ENCODE measurements at regions of chr17 and their contacts with region 1.

Region 1: DNA sequence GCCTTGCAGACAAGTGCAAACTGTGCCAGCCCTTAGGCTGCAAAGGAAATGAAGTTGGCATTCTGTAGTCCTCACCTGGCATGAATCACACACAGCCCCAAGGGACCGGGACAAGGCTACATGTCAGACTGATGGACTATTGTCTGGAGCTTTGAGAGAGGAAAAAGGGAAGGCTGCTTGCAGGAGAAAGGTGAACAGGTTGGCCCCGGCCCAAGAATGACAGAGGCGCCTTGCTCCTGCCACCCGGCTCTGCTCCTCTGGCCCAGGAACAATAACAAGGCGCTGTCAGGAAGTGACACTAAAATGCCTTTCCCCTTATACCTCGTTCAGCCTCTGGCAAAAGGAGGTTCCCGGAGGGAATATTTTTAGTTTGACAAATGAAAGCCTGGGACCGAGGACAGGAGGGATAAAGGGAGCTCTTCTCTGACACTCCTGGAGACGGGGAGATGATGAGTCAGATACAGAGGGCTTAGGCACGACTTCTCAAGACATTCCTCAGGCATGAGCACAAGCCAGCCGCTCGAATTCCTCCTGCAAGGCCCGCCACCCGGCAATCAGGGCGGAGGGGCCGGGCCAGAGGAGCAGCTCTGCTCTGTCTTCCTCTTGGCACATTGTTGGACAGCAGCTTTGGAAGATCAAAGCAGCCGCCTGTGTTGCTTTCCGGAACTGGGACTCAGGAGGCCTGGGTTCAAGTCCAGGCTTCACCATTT is 105.8 kb downstream of the NOG start:
- DNase-seq: no peak
- ATAC-seq: no peak
- H3K4me3 ChIP-seq: no peak overlapping the region
- H3K4me3 Mint-ChIP-seq: no peak overlapping the region
- H3K27ac ChIP-seq: no peak overlapping the region
- H3K27ac Mint-ChIP-seq: no peak overlapping the region
- H3K4me1 ChIP-seq: no peaks in the 10 kb centered on the region
- H3K4me1 Mint-ChIP-seq: no peaks in the 10 kb centered on the region
- H3K27me3 ChIP-seq: peaks cover 4% of the 10 kb centered on the region
- H3K27me3 Mint-ChIP-seq: peaks cover 49 to 77% of the 10 kb centered on the region in 2 donors
- CTCF ChIP-seq: no peak

Region 2: DNA sequence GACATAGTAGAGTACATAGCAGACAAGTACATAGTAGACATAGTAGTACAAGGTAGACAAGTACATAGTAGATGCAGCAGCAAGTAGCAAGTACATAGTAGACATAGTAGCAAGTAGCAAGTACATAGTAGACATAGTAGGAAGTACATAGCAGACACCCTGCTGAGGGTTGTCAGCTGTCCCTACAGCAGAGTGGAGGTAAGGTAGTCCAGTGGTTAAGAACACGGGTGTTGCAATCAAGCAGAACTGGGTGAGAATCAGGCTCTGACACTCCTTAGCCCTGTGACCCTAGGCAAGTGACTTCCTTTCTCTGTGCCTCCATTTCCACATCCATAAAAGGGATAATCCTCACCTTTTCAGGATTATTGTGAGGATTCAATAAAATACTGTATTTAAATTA is 11.2 kb before region 1 on chr17:
- intact Hi-C with region 1: loop called (anchors 2 kb)
- DNase-seq: no peak
- ATAC-seq: no peak
- H3K4me3 ChIP-seq: no peak overlapping the region
- H3K4me3 Mint-ChIP-seq: no peak overlapping the region
- H3K27ac ChIP-seq: no peak overlapping the region
- H3K27ac Mint-ChIP-seq: no peak overlapping the region
- H3K4me1 ChIP-seq: no peaks in the 10 kb centered on the region
- H3K4me1 Mint-ChIP-seq: peaks cover 6 to 7% of the 10 kb centered on the region in 2 donors
- H3K27me3 ChIP-seq: peaks cover 23% of the 10 kb centered on the region
- H3K27me3 Mint-ChIP-seq: peaks cover 66 to 81% of the 10 kb centered on the region in 2 donors
- CTCF ChIP-seq: no peak